ENCODE measurements at regions of chr12 and their contacts with region 1.

Region 1: GRCh38 chr12:53625946-53626701 is at the start of gene ATF7:
- DNase-seq: peak; percentile 96
- ATAC-seq: peak; percentile 98
- H3K4me3 ChIP-seq: peak within 1 kb of the TSS; percentile 94
- H3K27ac ChIP-seq: peak within 1 kb of the TSS; percentile 96
- H3K4me1 ChIP-seq: no peaks in the 10 kb centered on the region
- H3K27me3 ChIP-seq: no peaks in the 10 kb centered on the region
- CTCF ChIP-seq: no peak
- EP300 ChIP-seq: 0 out of 4 replicates have a peak, but pooled peaks of 1 of the 2 experiments have one; percentile 23
- POLR2A ChIP-seq: peak; percentile 80
- RAD21 ChIP-seq: no peak
- polyA plus RNA-seq, gene ATF7: 21.8 to 26.8 TPM

Region 2: DNA sequence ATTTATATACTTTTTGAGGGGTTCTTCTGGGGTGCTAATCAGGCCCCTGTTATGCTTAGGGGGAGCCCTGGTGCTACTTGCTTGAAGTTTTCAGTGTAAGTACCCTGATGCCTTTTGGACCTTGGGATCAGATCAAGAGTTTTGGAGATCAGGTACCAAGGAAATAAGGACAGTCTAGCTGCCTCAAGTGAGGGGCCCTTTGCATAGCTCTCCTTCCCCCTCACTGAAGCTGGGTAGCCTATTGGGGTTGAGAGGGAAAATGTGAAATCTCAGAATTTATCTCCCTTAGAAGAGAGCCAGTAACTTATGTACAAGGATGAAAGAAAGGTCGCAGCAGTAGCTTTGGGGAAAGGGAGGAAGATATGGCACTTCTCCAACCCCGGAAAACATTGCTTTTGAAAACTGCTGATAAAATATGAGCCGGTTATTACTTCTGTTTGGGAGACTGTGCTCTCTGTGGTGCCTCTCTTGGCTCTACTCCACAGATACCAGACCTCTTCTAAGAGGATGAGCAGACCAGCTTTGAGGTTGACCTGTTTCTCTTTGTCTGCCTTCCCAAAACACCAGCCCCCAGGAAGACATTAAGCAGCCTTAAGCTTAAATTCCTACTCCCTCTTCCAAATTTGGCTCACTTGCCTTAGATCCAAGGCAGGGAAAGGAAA is 211.2 kb before region 1 on chr12:
- CTCF ChIA-PET with region 1: no interaction called
- POLR2A ChIA-PET with region 1: no interaction called
- RAD21 ChIA-PET with region 1: no interaction called
- SMC1A ChIA-PET with region 1: no interaction called
- in situ Hi-C with region 1: no loop called
- intact Hi-C with region 1: no loop called
- DNase-seq: no peak
- ATAC-seq: no peak
- H3K4me3 ChIP-seq: no peak overlapping the region
- H3K27ac ChIP-seq: no peak overlapping the region
- H3K4me1 ChIP-seq: peaks cover 18% of the 10 kb centered on the region
- H3K27me3 ChIP-seq: no peaks in the 10 kb centered on the region
- CTCF ChIP-seq: no peak
- EP300 ChIP-seq: no peak
- POLR2A ChIP-seq: no peak
- RAD21 ChIP-seq: no peak

Region 3: GRCh38 chr12:53551889-53552291 is 74.2 kb before region 1 on chr12:
- CTCF ChIA-PET with region 1: interaction called, 3 read pairs
- POLR2A ChIA-PET with region 1: interaction called, 4 read pairs
- RAD21 ChIA-PET with region 1: interaction called, 6 read pairs
- SMC1A ChIA-PET with region 1: interaction called, 11 read pairs
- in situ Hi-C with region 1: no loop called
- intact Hi-C with region 1: no loop called
- DNase-seq: no peak
- ATAC-seq: no peak; the same call in 2 of the 3 replicates
- H3K4me3 ChIP-seq: no peak overlapping the region
- H3K27ac ChIP-seq: no peak overlapping the region
- H3K4me1 ChIP-seq: no peaks in the 10 kb centered on the region
- H3K27me3 ChIP-seq: no peaks in the 10 kb centered on the region
- CTCF ChIP-seq: 0 out of 6 replicates have a peak, but pooled peaks of 1 of the 3 experiments have one; percentile 6
- EP300 ChIP-seq: no peak
- POLR2A ChIP-seq: no peak
- RAD21 ChIP-seq: no peak

Region 4: GRCh38 chr12:53575502-53576253 is 50.4 kb before region 1 on chr12:
- CTCF ChIA-PET with region 1: interaction called, 8 read pairs
- POLR2A ChIA-PET with region 1: interaction called, 10 read pairs
- RAD21 ChIA-PET with region 1: interaction called, 5 read pairs
- SMC1A ChIA-PET with region 1: interaction called, 9 read pairs
- in situ Hi-C with region 1: no loop called
- intact Hi-C with region 1: no loop called
- DNase-seq: no peak
- ATAC-seq: no peak
- H3K4me3 ChIP-seq: no peak overlapping the region
- H3K27ac ChIP-seq: no peak overlapping the region
- H3K4me1 ChIP-seq: peaks cover 45% of the 10 kb centered on the region
- H3K27me3 ChIP-seq: no peaks in the 10 kb centered on the region
- CTCF ChIP-seq: no peak
- EP300 ChIP-seq: no peak
- POLR2A ChIP-seq: no peak
- RAD21 ChIP-seq: no peak

Measured in GM12878 (cell line).